HepG2 (cell line): ENCODE measurements at regions of chr3 and their contacts with region 1.

Region 1: DNA sequence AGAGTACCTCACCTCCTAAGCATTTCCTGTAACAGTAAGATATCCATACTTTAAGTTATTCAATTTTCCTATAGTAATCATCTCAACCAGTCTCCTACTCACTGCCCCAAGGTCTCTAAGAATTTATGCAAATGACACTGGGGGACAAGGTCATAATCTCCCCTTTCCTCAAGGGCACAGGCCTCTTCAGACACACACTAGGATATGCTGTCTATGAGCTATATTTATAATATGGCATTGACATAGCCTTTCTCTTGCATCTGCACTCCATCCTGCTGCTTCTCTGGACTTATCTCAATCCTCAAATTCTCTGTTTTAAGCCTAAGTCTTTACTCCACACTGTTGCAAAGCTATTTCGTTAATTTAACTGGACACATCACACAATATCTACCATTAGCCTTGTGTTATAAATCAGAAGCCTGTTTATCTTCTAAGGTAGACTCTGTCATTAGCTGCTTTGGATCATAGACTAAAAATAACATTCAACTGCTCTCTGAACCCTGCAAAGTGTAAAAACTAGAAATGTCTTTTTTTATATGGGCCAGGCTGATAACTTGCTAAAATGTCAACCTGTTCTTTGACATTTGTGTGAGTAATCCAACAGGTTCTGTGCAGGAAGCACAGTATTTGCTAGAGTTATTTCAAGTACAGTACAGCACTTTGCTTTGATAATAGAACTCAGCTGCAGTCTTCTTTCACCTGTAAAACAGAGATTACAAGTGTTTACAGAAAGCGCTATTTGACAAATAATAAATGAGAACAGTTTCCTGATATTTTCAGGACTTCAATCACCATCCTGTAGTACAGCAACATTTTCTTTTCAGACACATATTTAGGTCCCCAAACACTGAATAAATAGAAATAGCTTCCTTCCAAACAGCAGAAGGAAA is 17.8 kb upstream of the SEC62 start:
- DNase-seq: no peak
- ATAC-seq: no peak
- H3K4me3 ChIP-seq: no peak overlapping the region
- H3K27ac ChIP-seq: no peak overlapping the region
- H3K4me1 ChIP-seq: no peaks in the 10 kb centered on the region
- H3K27me3 ChIP-seq: peaks cover 0 to 1% of the 10 kb centered on the region in 2 experiments; a peak in 1 of 5 replicates
- CTCF ChIP-seq: no peak
- EP300 ChIP-seq: no peak
- POLR2A ChIP-seq: no peak
- RAD21 ChIP-seq: no peak

Region 2: DNA sequence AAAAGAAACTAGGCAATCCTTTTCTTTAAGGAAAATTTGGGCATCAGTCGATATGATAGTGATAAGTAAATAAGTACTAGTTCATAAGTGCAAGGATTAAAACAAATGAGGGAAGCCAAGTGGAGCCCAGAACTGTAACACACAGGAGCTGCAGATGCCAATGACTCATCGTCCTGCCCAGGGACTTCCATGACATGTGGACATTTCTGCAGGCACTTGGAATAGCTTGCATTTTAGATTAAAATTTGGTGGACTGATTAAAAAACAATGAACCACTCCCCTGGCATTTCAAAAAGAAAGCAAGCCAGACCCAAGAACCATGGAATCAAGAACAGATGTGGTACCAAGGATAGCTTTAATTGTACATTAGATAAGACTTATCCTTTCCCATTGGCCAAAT is 34.5 kb before region 1 on chr3:
- CTCF ChIA-PET with region 1: no interaction called
- POLR2A ChIA-PET with region 1: no interaction called
- in situ Hi-C with region 1: no loop called
- intact Hi-C with region 1: loop called (anchors 1 kb)
- DNase-seq: no peak
- ATAC-seq: no peak
- H3K4me3 ChIP-seq: no peak overlapping the region
- H3K27ac ChIP-seq: no peak overlapping the region
- H3K4me1 ChIP-seq: no peaks in the 10 kb centered on the region
- H3K27me3 ChIP-seq: peaks cover 0 to 3% of the 10 kb centered on the region in 2 experiments; a peak in 1 of 5 replicates
- CTCF ChIP-seq: no peak
- EP300 ChIP-seq: no peak
- POLR2A ChIP-seq: no peak
- RAD21 ChIP-seq: no peak